ENCODE measurements at regions of chr19 and their contacts with region 1.

Region 1: DNA sequence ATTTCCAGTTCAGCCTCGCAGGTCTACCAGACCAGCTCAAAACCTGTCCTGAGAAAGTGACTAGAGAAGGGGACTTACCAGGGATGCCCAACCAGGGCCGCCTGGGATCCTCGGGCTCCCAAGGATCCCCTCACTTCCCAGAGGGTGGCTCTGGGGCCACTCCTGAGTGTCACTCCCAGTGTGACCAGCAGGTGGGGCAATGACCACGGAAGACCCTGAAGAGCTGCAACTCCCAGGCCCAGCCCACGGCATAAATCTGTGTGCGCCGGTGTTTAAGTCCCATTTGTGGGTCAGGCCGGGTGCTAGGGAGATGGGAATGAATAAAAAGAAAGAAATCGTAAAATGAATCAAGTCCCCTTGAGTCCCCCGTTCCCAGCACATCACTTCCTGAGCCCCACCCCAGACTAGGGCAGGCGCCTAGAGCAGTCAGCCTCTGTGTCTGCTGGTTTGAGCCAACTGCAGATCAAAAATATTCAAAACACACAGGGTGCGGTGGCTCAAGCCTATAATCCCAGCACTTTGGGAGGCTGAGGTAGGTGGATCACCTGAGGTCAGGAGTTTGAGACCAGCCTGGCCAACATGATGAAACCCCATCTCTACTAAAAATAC is 10.7 kb downstream of the PTGIR start:
- DNase-seq: peak; percentile 89
- ATAC-seq: peak; percentile 53
- H3K4me3 ChIP-seq: no peak overlapping the region
- H3K4me3 Mint-ChIP-seq: peak overlapping the region; percentile 26
- H3K27ac ChIP-seq: no peak overlapping the region
- H3K27ac Mint-ChIP-seq: peak overlapping the region; percentile 77
- H3K4me1 ChIP-seq: peaks cover 49 to 71% of the 10 kb centered on the region in 2 donors
- H3K4me1 Mint-ChIP-seq: peaks cover 58% of the 10 kb centered on the region
- H3K27me3 ChIP-seq: no peaks in the 10 kb centered on the region
- H3K27me3 Mint-ChIP-seq: no peaks in the 10 kb centered on the region
- CTCF ChIP-seq: peak; percentile 86

Region 2: DNA sequence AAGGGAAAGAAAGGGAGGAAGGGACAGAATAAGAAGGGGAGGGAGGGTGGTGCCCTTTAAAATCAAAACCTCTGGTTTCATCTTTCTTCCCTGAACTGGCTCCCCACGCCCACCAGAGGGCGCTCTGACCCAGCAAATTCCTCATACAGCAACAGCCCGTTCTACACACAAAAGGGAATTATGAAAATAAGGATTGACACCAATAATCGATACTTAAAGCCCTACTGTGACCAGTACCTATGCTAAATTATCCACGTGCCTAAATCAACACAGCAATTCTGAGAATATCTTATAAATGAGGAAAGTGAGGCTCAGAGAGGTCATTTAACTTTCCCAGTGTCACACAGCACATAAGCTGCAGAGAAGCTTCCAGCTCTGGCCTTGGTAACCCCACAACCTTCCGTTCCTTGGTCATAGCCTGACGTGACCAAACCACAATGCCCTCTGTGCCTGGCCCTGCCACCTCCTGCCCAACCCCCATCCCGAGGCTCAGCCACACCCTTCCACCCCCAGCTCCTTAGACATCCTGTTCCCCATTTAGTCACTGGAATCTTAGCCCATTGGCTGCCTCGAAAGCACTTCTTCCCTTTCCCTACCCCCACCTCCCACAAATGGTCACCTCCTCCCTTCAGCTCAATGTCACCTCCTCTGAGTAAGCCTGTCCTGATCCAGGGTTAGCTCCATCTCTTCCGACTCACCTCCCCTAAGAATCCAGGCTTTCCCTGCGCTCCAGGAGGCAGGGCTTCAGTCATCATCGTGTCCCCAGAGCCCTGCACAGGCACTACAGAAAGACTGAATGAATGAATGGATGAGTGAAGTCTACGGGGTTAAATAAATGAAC is 84.4 kb before region 1 on chr19:
- CTCF ChIA-PET with region 1: interaction called, 6 read pairs
- POLR2A ChIA-PET with region 1: interaction called, 3 read pairs
- intact Hi-C with region 1: loop called (anchors 1 kb)
- DNase-seq: peak; percentile 81
- ATAC-seq: peak; percentile 67
- H3K4me3 ChIP-seq: no peak overlapping the region
- H3K4me3 Mint-ChIP-seq: no peak overlapping the region
- H3K27ac ChIP-seq: no peak overlapping the region
- H3K27ac Mint-ChIP-seq: no peak overlapping the region
- H3K4me1 ChIP-seq: peaks cover 0 to 10% of the 10 kb centered on the region in 2 donors
- H3K4me1 Mint-ChIP-seq: peaks cover 10% of the 10 kb centered on the region
- H3K27me3 ChIP-seq: peaks cover 0 to 15% (median 3%) of the 10 kb centered on the region in 4 experiments
- H3K27me3 Mint-ChIP-seq: peaks cover 8% of the 10 kb centered on the region
- CTCF ChIP-seq: peak; percentile 98

Region 3: GRCh38 chr19:46624958-46625661 is 10.9 kb after region 1 on chr19 and contains the start of gene PTGIR:
- CTCF ChIA-PET with region 1: interaction called, 13 read pairs
- POLR2A ChIA-PET with region 1: interaction called, 10 read pairs
- intact Hi-C with region 1: no loop called
- DNase-seq: peak; percentile 42
- ATAC-seq: peak; percentile 44
- H3K4me3 ChIP-seq: peak within 1 kb of the TSS in 1 of 5 experiments; percentile 9
- H3K4me3 Mint-ChIP-seq: peak within 1 kb of the TSS; percentile 54
- H3K27ac ChIP-seq: no peak within 1 kb of the TSS
- H3K27ac Mint-ChIP-seq: peak within 1 kb of the TSS; percentile 59
- H3K4me1 ChIP-seq: peaks cover 45 to 55% of the 10 kb centered on the region in 2 donors
- H3K4me1 Mint-ChIP-seq: peaks cover 56% of the 10 kb centered on the region
- H3K27me3 ChIP-seq: no peaks in the 10 kb centered on the region
- H3K27me3 Mint-ChIP-seq: no peaks in the 10 kb centered on the region
- CTCF ChIP-seq: no peak
- total RNA-seq, gene PTGIR: 1.9 and 2.5 TPM in 2 replicates

Region 4: DNA sequence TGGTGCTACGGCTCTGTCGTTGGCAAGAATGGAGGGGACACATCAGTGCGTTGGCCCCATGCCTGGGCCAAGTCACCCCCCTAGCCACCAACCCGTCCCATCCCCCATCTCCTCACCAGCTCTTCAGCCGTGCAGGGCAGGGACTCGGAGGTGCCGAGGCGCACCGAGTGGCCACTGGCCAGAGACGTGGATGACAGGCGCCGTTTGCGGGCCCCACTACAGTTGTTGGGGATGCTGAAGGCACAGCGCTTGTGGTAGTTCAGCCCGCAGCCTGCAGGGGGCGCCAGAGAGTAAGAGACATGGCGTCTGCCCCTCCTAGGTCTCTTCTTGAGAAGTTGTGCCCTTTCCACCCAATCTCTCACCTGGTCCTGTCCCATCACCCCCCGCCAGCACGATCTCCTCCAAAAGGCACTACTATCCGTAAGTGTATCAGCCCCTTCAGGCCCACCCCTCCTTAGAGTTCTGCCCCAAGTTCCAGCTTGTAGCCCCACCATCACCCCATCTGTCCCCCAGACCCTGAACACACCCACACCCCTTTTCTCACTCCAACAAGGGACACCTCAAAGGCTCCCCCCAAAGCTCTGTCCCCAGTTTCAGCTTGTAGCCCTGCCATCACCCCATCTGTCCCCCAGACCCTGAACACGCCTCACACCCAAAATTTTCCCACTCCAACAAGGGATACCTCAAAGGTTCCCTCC is 90.3 kb after region 1 on chr19:
- CTCF ChIA-PET with region 1: interaction called, 13 read pairs
- POLR2A ChIA-PET with region 1: no interaction called
- intact Hi-C with region 1: no loop called
- DNase-seq: peak; percentile 85
- ATAC-seq: peak; percentile 93
- H3K4me3 ChIP-seq: no peak overlapping the region
- H3K4me3 Mint-ChIP-seq: no peak overlapping the region
- H3K27ac ChIP-seq: peak overlapping the region in 1 of 2 donors; percentile 48
- H3K27ac Mint-ChIP-seq: peak overlapping the region; percentile 87
- H3K4me1 ChIP-seq: peaks cover 3 to 8% of the 10 kb centered on the region in 2 donors
- H3K4me1 Mint-ChIP-seq: peaks cover 13% of the 10 kb centered on the region
- H3K27me3 ChIP-seq: no peaks in the 10 kb centered on the region
- H3K27me3 Mint-ChIP-seq: no peaks in the 10 kb centered on the region
- CTCF ChIP-seq: peak; percentile 93

Region 5: GRCh38 chr19:46850228-46851203 is 236.3 kb after region 1 on chr19 and contains the start of gene AP2S1:
- CTCF ChIA-PET with region 1: no interaction called
- POLR2A ChIA-PET with region 1: no interaction called
- intact Hi-C with region 1: loop called (anchors 1 kb)
- DNase-seq: peak; percentile 95
- ATAC-seq: peak; percentile 93
- H3K4me3 ChIP-seq: peak within 1 kb of the TSS; percentile 59 to 89 (median 82)
- H3K4me3 Mint-ChIP-seq: peak within 1 kb of the TSS; percentile 98
- H3K27ac ChIP-seq: peak within 1 kb of the TSS; percentile 58 to 81
- H3K27ac Mint-ChIP-seq: peak within 1 kb of the TSS; percentile 86
- H3K4me1 ChIP-seq: peaks cover 17 to 24% of the 10 kb centered on the region in 2 donors
- H3K4me1 Mint-ChIP-seq: peaks cover 32% of the 10 kb centered on the region
- H3K27me3 ChIP-seq: no peaks in the 10 kb centered on the region
- H3K27me3 Mint-ChIP-seq: no peaks in the 10 kb centered on the region
- CTCF ChIP-seq: no peak
- total RNA-seq, gene AP2S1: 47.2 and 49.3 TPM in 2 replicates